A549 (cell line): ENCODE measurements at regions of chr3 and their contacts with region 1.

Region 1: DNA sequence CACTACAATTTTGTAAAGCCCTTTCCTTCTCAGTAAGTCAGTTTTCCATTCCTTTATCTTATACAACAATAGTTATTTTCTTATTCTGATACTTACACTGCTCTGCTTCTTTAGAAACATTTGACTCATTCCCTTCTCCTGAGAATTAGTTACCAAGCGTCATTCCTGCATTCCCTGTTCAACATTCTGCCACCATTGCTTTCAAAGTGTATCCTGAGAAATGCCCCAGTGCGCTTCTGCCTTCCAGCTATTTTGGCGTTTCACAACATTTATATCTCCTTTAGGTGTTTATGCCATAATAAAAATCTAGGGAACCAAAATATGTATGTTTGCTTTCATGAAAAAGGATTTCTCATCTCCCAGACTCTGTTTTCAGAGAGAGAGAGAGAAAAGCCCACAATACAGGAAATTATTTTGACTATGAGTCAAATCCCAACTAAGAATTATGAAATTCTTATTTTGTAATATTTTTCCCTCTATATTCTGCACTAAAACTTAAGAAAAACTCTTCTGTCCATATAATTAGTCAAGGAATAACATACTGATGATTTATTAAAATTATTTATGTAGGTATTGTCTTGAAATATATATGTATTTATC is 118.2 kb upstream of the RAP2B start:
- DNase-seq: no peak
- ATAC-seq: 0 out of 6 replicates have a peak, but pooled peaks have one; percentile 21 to 62
- H3K4me3 ChIP-seq: peak overlapping the region; percentile 43; the same call in 2 of the 3 replicates
- H3K27ac ChIP-seq: peak overlapping the region; percentile 80 to 86
- H3K4me1 ChIP-seq: peaks cover 20% of the 10 kb centered on the region
- CTCF ChIP-seq: no peak
- EP300 ChIP-seq: no peak
- POLR2A ChIP-seq: no peak
- RAD21 ChIP-seq: no peak

Region 2: GRCh38 chr3:152937234-152937633 is 106.6 kb before region 1 on chr3:
- CTCF ChIA-PET with region 1: no interaction called
- POLR2A ChIA-PET with region 1: no interaction called
- DNase-seq: no peak
- ATAC-seq: no peak
- H3K4me3 ChIP-seq: no peak overlapping the region
- H3K27ac ChIP-seq: no peak overlapping the region
- H3K4me1 ChIP-seq: no peaks in the 10 kb centered on the region
- CTCF ChIP-seq: no peak
- EP300 ChIP-seq: no peak
- POLR2A ChIP-seq: no peak
- RAD21 ChIP-seq: peak in 1 of 2 experiments; percentile 30; a peak in 2 of 5 replicates

Region 3: DNA sequence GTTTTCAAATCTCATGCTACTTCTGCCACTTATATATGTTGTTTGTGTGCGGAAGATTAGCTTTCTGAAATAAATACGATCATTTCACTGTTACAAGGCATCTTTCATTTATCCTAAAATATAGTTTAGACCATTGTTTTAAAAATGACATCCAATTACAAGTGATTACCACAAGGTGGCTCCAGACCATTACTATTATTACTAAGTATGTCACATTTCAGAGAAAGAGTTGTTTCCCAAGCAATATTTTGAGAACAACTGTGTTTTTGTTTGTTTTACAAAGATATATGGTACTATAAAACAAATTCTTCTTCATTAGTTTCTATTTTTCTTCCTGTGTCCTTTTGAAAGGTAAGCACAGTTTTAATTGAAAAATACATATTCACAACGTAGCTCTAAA is 17.8 kb before region 1 on chr3:
- CTCF ChIA-PET with region 1: interaction called, 21 read pairs
- POLR2A ChIA-PET with region 1: no interaction called
- DNase-seq: peak; percentile 31 to 49
- ATAC-seq: peak; percentile 19 to 56; a peak in 2 of 6 replicates
- H3K4me3 ChIP-seq: no peak overlapping the region
- H3K27ac ChIP-seq: no peak overlapping the region
- H3K4me1 ChIP-seq: no peaks in the 10 kb centered on the region
- CTCF ChIP-seq: peak; percentile 81
- EP300 ChIP-seq: no peak
- POLR2A ChIP-seq: no peak
- RAD21 ChIP-seq: peak; percentile 92 to 93

Region 4: DNA sequence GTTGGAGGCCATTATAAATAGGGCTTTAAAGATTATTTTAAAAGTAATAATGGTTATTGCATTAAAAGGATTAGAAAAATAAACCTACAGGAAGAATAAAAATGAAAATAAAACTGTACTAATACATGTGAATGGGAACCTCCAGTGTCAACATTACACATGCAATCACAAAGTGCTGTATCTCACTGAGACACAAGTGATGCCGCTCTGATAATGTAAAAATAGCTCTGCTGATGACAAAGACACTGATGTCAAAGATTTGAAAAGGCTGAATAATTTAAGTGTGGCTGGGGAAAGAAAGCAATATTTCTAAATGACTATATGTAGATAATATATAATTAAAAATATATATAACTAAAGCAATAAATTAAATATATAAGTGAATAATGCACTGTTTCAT is 10.9 kb before region 1 on chr3:
- CTCF ChIA-PET with region 1: interaction called, 21 read pairs
- POLR2A ChIA-PET with region 1: no interaction called
- DNase-seq: no peak
- ATAC-seq: no peak
- H3K4me3 ChIP-seq: no peak overlapping the region
- H3K27ac ChIP-seq: no peak overlapping the region
- H3K4me1 ChIP-seq: no peaks in the 10 kb centered on the region
- CTCF ChIP-seq: no peak
- EP300 ChIP-seq: no peak
- POLR2A ChIP-seq: no peak
- RAD21 ChIP-seq: no peak

Region 5: DNA sequence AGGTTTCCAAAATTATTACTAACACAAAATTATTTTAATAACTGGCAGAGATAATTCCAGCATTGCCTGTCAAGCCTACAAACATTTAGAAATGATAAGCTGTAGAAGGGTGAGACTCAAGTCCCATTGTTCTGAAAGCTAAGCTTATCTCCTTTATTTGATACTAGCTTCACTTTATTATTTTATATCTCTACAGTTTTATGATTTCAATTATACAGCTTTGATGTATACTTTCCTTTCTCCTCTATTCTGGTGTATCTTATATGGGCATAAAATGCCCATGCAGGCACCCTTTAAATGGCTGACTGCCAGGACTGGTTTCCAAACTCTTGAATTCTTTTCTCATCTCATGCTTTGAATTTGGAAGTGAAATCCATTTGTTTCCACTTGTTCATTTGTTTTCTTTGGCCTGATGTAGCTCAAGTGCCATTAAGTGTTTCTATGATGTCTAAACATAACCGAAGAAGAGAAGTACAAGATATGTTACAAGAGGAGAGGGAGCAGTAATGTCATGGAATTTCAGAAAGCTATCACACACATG is 705.3 kb after region 1 on chr3:
- CTCF ChIA-PET with region 1: no interaction called
- POLR2A ChIA-PET with region 1: no interaction called
- DNase-seq: no peak
- ATAC-seq: no peak
- H3K4me3 ChIP-seq: no peak overlapping the region
- H3K27ac ChIP-seq: no peak overlapping the region
- H3K4me1 ChIP-seq: no peaks in the 10 kb centered on the region
- CTCF ChIP-seq: no peak
- EP300 ChIP-seq: no peak
- POLR2A ChIP-seq: no peak
- RAD21 ChIP-seq: no peak